H1 (cell line): ENCODE measurements at regions of chr1 and their contacts with region 1.

Region 1: GRCh38 chr1:155287987-155288543 is 10.8 kb downstream of the HCN3 start:
- DNase-seq: no peak
- H3K4me3 ChIP-seq: no peak overlapping the region
- H3K27ac ChIP-seq: no peak overlapping the region
- H3K4me1 ChIP-seq: no peaks in the 10 kb centered on the region
- H3K27me3 ChIP-seq: no peaks in the 10 kb centered on the region
- CTCF ChIP-seq: no peak
- EP300 ChIP-seq: no peak
- POLR2A ChIP-seq: no peak
- RAD21 ChIP-seq: no peak

Region 2: GRCh38 chr1:155308493-155309422 is 20.7 kb after region 1 on chr1 and contains the start of gene FDPS:
- CTCF ChIA-PET with region 1: interaction called, 79 read pairs
- POLR2A ChIA-PET with region 1: interaction called, 9 read pairs
- DNase-seq: peak; percentile 89 to 97
- H3K4me3 ChIP-seq: peak within 1 kb of the TSS; percentile 79 to 100 (median 89)
- H3K27ac ChIP-seq: peak within 1 kb of the TSS; percentile 65
- H3K4me1 ChIP-seq: peaks cover 0 to 8% (median 4%) of the 10 kb centered on the region in 4 experiments; a peak in 6 of 7 replicates
- H3K27me3 ChIP-seq: no peaks in the 10 kb centered on the region; a peak in 1 of 7 replicates
- CTCF ChIP-seq: 0 out of 4 replicates have a peak, but pooled peaks of 1 of the 3 experiments have one; percentile 7
- EP300 ChIP-seq: no peak
- POLR2A ChIP-seq: peak; percentile 85 to 91
- RAD21 ChIP-seq: 0 out of 4 replicates have a peak, but pooled peaks of 1 of the 2 experiments have one; percentile 6
- total RNA-seq, gene FDPS: 368 and 370 TPM in 2 replicates

Region 3: GRCh38 chr1:155339515-155340097 is 51.5 kb after region 1 on chr1:
- CTCF ChIA-PET with region 1: no interaction called
- POLR2A ChIA-PET with region 1: no interaction called
- DNase-seq: no peak
- H3K4me3 ChIP-seq: no peak overlapping the region
- H3K27ac ChIP-seq: no peak overlapping the region
- H3K4me1 ChIP-seq: no peaks in the 10 kb centered on the region
- H3K27me3 ChIP-seq: no peaks in the 10 kb centered on the region
- CTCF ChIP-seq: no peak
- EP300 ChIP-seq: no peak
- POLR2A ChIP-seq: no peak
- RAD21 ChIP-seq: no peak